ENCODE measurements at regions of chr9 and their contacts with region 1.

Region 1: GRCh38 chr9:76216161-76216649 is 178.0 kb downstream of the RFK start:
- DNase-seq: no peak
- H3K4me3 Mint-ChIP-seq: no peak overlapping the region
- H3K27ac Mint-ChIP-seq: no peak overlapping the region
- H3K4me1 Mint-ChIP-seq: peaks cover 3% of the 10 kb centered on the region
- H3K27me3 Mint-ChIP-seq: peaks cover 1% of the 10 kb centered on the region

Region 2: GRCh38 chr9:76153902-76154629 is 62.1 kb before region 1 on chr9:
- intact Hi-C with region 1: loop called (anchors 10 kb)
- DNase-seq: no peak
- H3K4me3 Mint-ChIP-seq: no peak overlapping the region
- H3K27ac Mint-ChIP-seq: no peak overlapping the region
- H3K4me1 Mint-ChIP-seq: no peaks in the 10 kb centered on the region
- H3K27me3 Mint-ChIP-seq: no peaks in the 10 kb centered on the region

Region 3: GRCh38 chr9:76311586-76311985 is 95.4 kb after region 1 on chr9:
- intact Hi-C with region 1: no loop called
- DNase-seq: no peak
- H3K4me3 Mint-ChIP-seq: no peak overlapping the region
- H3K27ac Mint-ChIP-seq: no peak overlapping the region
- H3K4me1 Mint-ChIP-seq: no peaks in the 10 kb centered on the region
- H3K27me3 Mint-ChIP-seq: peaks cover 8% of the 10 kb centered on the region

Measured in activated CD4-positive, alpha-beta T cell treated with anti-CD3 and anti-CD28 coated beads, Interleukin-2, amount 10 ng/mL, durations not matched to agents 24 days and 14 days (primary cell).